Activated T-helper 1 cell treated with anti-CD3 and anti-CD28 coated beads, Interleukin-12 subunit alpha, Interleukin-12 subunit beta, Interleukin-2, Interleukin-4 antibody, amounts not matched to agents 30 ng/mL and 10 ng/mL and 1 ng/mL, durations not matched to agents 14 hours and 24 hours and 36 hours (primary cell): ENCODE measurements at regions of chr2 and their contacts with region 1.

Region 1: GRCh38 chr2:38750891-38751595 is at the start of gene SRSF7:
- DNase-seq: peak; percentile 96
- H3K4me3 Mint-ChIP-seq: peak within 1 kb of the TSS; percentile 98
- H3K27ac Mint-ChIP-seq: peak within 1 kb of the TSS; percentile 100
- H3K4me1 Mint-ChIP-seq: peaks cover 54% of the 10 kb centered on the region
- H3K27me3 Mint-ChIP-seq: no peaks in the 10 kb centered on the region
- total RNA-seq, gene SRSF7: 417 and 422 TPM in 2 replicates

Region 2: GRCh38 chr2:38875576-38876367 is 124.7 kb after region 1 on chr2 and contains the starts of genes DHX57 and MORN2:
- intact Hi-C with region 1: loop called (anchors 5 kb)
- DNase-seq: peak; percentile 78
- H3K4me3 Mint-ChIP-seq: peak within 1 kb of the TSS; percentile 99
- H3K27ac Mint-ChIP-seq: peak within 1 kb of the TSS; percentile 96
- H3K4me1 Mint-ChIP-seq: peaks cover 24% of the 10 kb centered on the region
- H3K27me3 Mint-ChIP-seq: no peaks in the 10 kb centered on the region
- total RNA-seq, gene DHX57: 18.6 and 20.3 TPM in 2 replicates
- total RNA-seq, gene MORN2: 4.9 and 5.3 TPM in 2 replicates